Activated B cell treated with CpG ODN at 0.5 μM for 24 hours (primary cell): ENCODE measurements at regions of chr1 and their contacts with region 1.

Region 1: DNA sequence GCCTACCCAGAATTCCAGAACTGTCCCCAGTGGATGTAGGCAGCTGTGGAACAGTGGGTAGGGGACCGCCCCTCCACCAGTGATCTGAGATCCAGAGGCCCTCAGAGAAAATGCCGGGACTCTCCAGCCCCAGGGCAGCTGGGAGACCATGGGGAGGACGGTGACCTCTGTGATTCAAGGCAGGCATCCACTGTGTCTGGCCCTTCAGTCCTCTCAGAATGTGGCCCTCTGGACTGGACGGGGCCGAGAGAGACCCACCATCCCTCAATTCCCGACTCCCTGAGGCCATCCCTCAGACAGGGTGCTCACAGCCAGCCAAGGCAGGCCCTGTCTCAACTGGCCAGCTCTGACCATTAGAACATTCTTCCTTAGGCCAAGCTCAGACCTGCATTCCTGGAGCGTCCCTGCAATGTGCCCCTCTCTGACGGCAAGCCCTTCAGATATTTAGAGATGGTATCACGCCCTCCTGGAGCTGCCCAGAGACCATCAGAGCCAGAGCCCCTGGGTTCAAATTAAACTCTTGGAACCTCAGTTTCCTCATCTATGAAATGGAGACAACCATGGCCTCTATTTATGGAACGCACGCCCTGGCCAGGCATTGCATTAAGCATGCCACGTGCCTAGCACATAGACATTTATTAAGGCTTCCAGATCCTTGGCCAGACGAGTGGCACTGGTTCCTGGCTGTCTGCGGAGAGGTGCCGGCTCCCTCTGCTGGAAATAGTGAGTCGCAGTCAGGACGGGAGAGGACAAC is 9.6 kb upstream of the EPS8L3 start:
- DNase-seq: peak; percentile 37
- ATAC-seq: peak; percentile 81
- H3K4me3 Mint-ChIP-seq: no peak overlapping the region
- H3K27ac Mint-ChIP-seq: no peak overlapping the region
- H3K4me1 Mint-ChIP-seq: peaks cover 3% of the 10 kb centered on the region
- H3K27me3 Mint-ChIP-seq: peaks cover 12% of the 10 kb centered on the region
- CTCF ChIP-seq: no peak

Region 2: GRCh38 chr1:110011527-110012041 is 238.3 kb after region 1 on chr1:
- CTCF ChIA-PET with region 1: interaction called, 27 read pairs
- POLR2A ChIA-PET with region 1: no interaction called
- intact Hi-C with region 1: loop called (anchors 1 kb)
- DNase-seq: no peak
- ATAC-seq: peak; percentile 90
- H3K4me3 Mint-ChIP-seq: peak overlapping the region; percentile 75
- H3K27ac Mint-ChIP-seq: peak overlapping the region; percentile 99
- H3K4me1 Mint-ChIP-seq: peaks cover 37% of the 10 kb centered on the region
- H3K27me3 Mint-ChIP-seq: no peaks in the 10 kb centered on the region
- CTCF ChIP-seq: peak; percentile 55